GM13976 (cell line): ENCODE measurements at regions of chr1 and their contacts with region 1.

Region 1: DNA sequence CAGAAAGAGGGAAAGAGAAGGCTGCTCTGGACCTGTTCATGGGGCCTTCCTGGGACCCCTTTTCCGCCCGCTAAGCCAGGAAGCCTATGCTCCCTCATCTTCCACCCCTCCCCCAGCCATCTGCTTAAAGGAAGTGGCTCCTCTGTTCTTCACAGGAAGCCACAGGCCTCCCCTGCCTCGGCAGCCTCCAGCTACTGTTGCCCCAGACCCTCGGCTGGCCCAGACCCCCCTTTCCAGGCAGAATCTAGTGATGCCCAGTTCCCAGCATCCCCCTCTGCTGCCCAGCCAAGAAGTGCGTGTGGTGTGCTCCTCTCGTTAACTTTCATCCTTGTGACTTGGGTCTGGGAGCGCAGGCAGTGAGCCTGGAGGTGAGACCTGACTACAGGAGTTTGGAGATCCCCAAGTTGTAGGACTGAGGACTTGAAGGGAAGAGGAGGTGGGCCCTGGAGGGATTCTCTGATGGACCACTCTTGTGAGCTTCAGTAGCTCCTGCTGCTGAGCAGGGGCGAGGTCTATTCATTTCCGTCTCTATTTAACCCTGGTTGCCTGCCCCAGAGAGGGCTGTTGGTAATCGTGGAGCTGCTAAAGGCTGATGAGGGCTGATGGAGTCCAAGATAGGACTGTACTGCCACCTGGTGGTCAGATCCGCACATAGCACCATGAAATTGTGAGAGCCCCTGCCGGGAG is 9.1 kb downstream of the IFI6 start:
- DNase-seq: peak; percentile 79
- CTCF ChIP-seq: peak; percentile 83

Region 2: DNA sequence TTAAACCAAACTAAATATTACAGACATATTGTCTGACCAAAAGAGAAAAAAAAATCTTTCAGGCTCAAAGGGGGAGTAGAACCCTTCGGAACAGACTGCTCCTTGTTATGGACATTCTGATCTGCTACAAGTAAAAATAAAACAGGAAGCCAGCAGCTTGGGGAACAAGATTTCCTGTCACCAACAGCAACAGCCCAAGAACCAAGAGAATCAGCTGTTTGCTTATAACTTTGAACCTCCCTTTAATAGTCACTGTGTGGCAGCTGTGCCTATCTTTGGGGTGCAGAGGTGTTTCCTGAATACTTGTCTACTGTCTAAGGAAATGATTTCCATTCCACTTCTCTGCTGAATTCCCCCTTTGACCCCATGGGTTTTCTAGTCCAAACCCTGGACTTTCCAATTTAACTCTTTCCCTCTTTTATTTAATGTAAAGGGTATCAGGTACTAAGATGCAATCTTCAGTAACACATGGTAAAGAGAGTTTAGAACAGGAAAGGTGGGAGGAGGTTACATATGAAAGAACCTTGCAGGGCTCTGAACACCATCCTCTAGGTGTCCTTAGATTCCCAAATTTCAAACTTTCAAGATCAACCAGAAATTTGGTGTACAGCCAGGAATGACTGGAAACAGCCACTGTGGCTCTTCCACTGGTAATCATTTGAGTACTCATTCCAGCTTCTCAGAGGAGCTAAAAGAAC is 231.8 kb before region 1 on chr1:
- in situ Hi-C with region 1: no loop called
- DNase-seq: peak; percentile 42
- CTCF ChIP-seq: no peak

Region 3: GRCh38 chr1:27603681-27604578 is 58.9 kb before region 1 on chr1 and contains the start of gene AHDC1:
- in situ Hi-C with region 1: loop called (anchors 5 kb)
- DNase-seq: peak; percentile 96
- CTCF ChIP-seq: no peak

Region 4: DNA sequence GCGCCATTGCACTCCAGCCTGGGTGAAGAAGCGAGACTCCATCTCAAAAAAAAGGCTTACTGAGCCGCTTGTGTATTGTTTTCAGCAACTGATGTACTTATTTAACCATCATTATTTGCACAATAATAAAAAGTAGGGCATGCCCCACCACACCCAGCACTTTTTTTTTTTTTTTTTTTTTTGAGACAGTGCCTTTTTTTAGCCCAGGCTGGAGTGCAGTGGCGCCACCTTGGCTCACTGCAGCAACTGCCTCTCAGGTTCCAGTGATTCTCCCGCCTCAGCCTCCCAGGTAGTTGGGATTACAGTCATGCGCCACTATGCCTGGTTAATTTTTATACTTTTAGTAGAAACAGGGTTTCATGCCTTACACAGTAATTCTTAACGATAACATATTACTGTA is 877.8 kb after region 1 on chr1:
- in situ Hi-C with region 1: no loop called
- DNase-seq: no peak
- CTCF ChIP-seq: no peak